RWPE1 (cell line): ENCODE measurements at regions of chr1 and their contacts with region 1.

Region 1: DNA sequence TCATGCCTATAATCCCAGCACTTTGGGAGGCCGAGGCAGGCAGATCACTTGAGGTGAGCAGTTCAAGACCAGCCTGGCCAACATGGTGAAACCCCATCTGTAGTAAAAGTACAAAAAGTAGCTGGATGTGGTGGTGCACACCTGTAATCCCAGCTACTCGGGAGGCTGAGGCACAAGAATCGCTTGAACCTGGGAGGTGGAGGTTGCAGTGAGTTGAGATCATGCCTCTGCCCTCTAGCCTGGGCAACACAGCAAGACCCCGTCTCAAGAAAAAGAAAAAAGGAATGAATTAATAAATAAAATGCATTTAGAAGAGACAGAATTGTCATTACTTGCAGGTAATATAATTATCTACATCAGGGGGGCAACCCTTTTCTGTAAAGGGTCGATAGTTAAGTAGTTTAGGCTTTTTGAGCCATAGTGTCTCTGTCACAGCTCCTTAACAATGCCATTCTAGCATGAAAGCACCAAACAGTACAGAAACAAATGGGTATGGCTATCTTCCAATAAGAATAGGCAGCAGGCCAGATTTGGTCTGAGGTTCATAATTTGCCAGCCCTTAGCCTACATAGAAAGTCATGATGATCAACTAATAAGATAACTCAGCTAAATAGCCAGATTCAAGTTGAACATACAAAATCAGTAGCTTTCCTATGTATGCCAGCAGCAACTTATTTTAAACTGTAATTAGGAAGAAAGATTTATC is 56.8 kb downstream of the RPRD2 start:
- DNase-seq: no peak
- H3K27ac ChIP-seq: no peak overlapping the region
- CTCF ChIP-seq: no peak

Region 2: DNA sequence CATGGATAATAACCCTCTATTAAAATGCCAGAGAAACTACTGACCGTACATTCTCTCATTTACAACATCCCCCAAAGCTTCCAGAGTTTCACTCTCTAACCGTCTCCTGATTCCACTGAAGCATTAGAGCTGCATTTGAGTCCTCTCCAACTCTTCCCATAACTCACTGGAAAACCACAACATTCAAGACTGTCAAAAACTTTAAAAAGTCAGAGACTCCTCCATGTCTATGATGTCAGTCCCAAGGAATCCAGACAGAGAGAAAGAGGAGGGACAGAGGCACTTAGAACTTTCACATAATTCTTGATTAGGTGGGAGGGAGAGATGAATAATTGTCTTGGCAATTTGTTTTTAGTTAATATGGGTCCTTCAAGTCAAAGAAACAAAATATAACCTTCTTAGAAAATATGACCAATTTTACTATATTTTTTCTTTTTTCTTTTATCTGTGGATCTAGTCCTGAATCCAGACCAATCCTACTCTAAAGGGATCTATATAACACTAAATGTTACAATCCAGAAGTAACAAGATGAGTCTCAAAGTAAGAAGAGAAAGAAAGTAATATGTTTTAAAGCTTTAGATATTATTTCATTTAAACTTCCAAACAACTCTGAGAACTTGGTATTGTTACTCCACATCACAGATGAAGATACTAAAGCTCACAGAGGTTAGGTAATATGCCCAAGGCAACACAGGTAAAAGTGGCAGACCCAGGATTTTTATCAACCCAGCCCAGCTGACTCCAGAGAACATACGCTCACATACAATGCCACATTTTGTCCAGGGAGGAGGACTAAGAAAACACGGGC is 434.0 kb before region 1 on chr1:
- CTCF ChIA-PET with region 1: no interaction called
- POLR2A ChIA-PET with region 1: no interaction called
- DNase-seq: no peak
- H3K27ac ChIP-seq: no peak overlapping the region
- CTCF ChIP-seq: no peak

Region 3: DNA sequence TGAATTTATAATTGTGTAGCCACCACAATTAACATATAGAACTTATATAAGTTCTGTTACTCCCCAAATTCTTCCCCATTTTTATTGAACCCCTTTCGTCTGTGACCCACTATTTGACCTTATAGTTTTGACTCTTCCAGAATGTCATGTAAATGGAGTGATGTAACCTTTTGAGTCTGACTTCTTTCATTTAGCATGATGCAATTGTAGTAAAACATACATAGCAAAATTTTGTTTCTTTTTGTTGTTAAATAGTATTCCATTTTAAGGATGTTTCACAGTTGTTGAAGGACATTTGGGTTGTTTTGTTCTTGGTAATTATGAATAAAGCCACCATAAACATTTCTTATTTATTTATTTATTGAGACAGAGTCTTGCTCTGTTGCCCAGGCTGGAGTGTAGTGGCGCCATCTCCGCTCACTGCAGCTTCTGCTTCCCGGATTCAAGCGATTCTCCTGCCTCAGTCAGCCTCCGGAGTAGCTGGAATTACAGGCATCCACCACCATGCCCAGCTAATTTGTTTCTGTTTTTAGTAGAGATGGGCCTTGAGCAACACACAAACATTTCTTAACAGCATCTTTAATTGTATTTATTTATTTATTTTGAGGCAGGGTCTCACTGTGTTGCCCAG is 23.2 kb before region 1 on chr1:
- CTCF ChIA-PET with region 1: interaction called, 11 read pairs
- POLR2A ChIA-PET with region 1: no interaction called
- DNase-seq: no peak
- H3K27ac ChIP-seq: no peak overlapping the region
- CTCF ChIP-seq: no peak

Region 4: GRCh38 chr1:150567717-150568593 is 147.2 kb after region 1 on chr1:
- CTCF ChIA-PET with region 1: no interaction called
- POLR2A ChIA-PET with region 1: no interaction called
- DNase-seq: peak; percentile 87
- H3K27ac ChIP-seq: peak overlapping the region; percentile 100
- CTCF ChIP-seq: no peak